ENCODE measurements at regions of chr3 and their contacts with region 1.

Region 1: DNA sequence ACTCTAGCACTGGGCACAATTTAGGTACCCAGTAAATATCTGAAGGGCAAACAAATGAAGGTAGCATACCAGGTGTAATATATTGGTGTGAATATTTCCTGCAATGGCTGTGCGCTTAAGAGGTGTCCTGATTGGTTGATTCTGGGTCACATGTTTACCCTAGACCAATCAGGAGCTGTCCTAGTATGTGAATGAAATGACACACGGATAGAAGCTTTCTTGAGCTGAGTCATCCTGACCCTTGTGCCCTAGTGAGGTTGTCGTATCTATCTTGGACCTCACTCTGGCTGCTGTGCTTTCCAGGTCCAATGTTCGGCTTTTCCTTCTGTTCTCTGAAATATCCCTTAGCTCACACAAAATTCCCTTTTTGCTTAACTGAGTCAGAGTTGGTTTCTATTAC is 58.1 kb upstream of the FOXP1 start:
- DNase-seq: no peak
- ATAC-seq: peak; percentile 81
- H3K4me3 ChIP-seq: no peak overlapping the region
- H3K4me1 ChIP-seq: no peaks in the 10 kb centered on the region
- CTCF ChIP-seq: no peak

Region 2: GRCh38 chr3:70550723-70551319 is 1090.9 kb before region 1 on chr3:
- intact Hi-C with region 1: loop called in 1 of 2 experiments (anchors 10 kb)
- DNase-seq: peak; percentile 54 to 85 (median 77)
- ATAC-seq: peak; percentile 84
- H3K4me3 ChIP-seq: no peak overlapping the region
- H3K4me1 ChIP-seq: no peaks in the 10 kb centered on the region
- CTCF ChIP-seq: peak; percentile 63

Region 3: GRCh38 chr3:71987828-71988227 is 346.2 kb after region 1 on chr3:
- intact Hi-C with region 1: no loop called
- DNase-seq: no peak
- ATAC-seq: no peak
- H3K4me3 ChIP-seq: no peak overlapping the region
- H3K4me1 ChIP-seq: no peaks in the 10 kb centered on the region
- CTCF ChIP-seq: no peak

Measured in mucosa of descending colon (tissue), 3 donors.